A549 (cell line): ENCODE measurements at regions of chr12 and their contacts with region 1.

Region 1: GRCh38 chr12:64696080-64696741 is 63.0 kb downstream of the GNS start:
- DNase-seq: peak; percentile 42 to 53
- ATAC-seq: peak; percentile 11 to 45; a peak in 3 of 6 replicates
- H3K4me3 ChIP-seq: no peak overlapping the region
- H3K27ac ChIP-seq: peak overlapping the region; percentile 38 to 49; a peak in 5 of 6 replicates
- H3K4me1 ChIP-seq: peaks cover 21% of the 10 kb centered on the region
- CTCF ChIP-seq: peak; percentile 78
- EP300 ChIP-seq: no peak
- POLR2A ChIP-seq: no peak
- RAD21 ChIP-seq: peak; percentile 82 to 92

Region 2: DNA sequence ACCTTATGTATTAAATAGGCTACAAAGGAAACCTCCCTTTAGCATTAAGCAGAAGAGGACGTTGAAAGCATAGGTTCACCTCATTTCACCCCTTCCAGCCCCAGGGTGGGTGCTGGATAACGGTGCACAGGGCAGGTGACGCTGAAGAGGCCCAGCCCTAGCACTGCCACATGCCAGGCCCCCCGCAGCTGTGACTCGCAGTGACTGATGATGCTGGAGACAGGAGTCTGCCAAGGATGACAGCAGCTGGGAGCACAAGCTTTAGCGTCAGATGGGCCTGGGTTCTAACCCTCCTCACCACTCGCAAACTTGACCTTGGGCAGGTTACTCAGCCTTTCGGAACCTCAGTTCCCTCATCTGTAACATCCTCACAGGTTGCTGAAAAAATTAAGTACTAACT is 167.6 kb before region 1 on chr12:
- CTCF ChIA-PET with region 1: interaction called, 27 read pairs
- POLR2A ChIA-PET with region 1: no interaction called
- DNase-seq: no peak
- ATAC-seq: 0 out of 6 replicates have a peak, but pooled peaks of 1 of the 2 experiments have one; percentile 30
- H3K4me3 ChIP-seq: no peak overlapping the region
- H3K27ac ChIP-seq: no peak overlapping the region
- H3K4me1 ChIP-seq: no peaks in the 10 kb centered on the region
- CTCF ChIP-seq: no peak
- EP300 ChIP-seq: no peak
- POLR2A ChIP-seq: no peak
- RAD21 ChIP-seq: no peak

Region 3: GRCh38 chr12:64566732-64567399 is 129.3 kb before region 1 on chr12:
- CTCF ChIA-PET with region 1: interaction called, 342 read pairs
- POLR2A ChIA-PET with region 1: no interaction called
- DNase-seq: no peak
- ATAC-seq: no peak
- H3K4me3 ChIP-seq: no peak overlapping the region
- H3K27ac ChIP-seq: no peak overlapping the region
- H3K4me1 ChIP-seq: peaks cover under 1% of the 10 kb centered on the region; the same call in 2 of the 3 replicates
- CTCF ChIP-seq: no peak
- EP300 ChIP-seq: no peak
- POLR2A ChIP-seq: no peak
- RAD21 ChIP-seq: no peak

Region 4: DNA sequence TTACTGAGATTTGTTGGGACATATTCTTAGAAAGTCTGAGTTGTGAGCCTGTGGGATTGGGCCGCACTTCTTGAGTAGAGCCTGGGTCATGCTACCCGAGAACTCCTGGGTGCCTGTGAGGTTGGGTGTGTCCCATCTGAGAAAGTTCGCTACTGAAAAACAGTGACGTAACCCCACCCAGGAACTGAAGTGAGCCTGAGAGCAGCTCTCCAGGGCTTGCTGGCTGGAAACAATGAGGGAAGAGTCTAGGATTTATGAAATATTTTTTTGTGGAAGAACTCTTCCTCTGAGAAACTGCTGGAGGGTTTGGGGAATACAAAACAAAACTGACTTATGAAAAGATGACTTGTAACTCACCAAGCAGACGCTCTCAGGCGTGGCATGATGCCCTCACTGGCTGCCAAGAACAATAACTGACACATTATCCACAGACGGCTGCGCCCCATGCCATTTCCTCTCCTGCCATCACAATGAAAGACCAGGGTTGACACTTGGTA is 16.7 kb before region 1 on chr12:
- CTCF ChIA-PET with region 1: interaction called, 112 read pairs
- POLR2A ChIA-PET with region 1: no interaction called
- DNase-seq: peak; percentile 82 to 91
- ATAC-seq: peak; percentile 85 to 86
- H3K4me3 ChIP-seq: peak overlapping the region; percentile 34
- H3K27ac ChIP-seq: peak overlapping the region; percentile 86 to 92
- H3K4me1 ChIP-seq: peaks cover 88% of the 10 kb centered on the region
- CTCF ChIP-seq: no peak
- EP300 ChIP-seq: no peak
- POLR2A ChIP-seq: no peak
- RAD21 ChIP-seq: no peak

Region 5: GRCh38 chr12:64714551-64714968 is 18.3 kb after region 1 on chr12:
- CTCF ChIA-PET with region 1: interaction called, 45 read pairs
- POLR2A ChIA-PET with region 1: no interaction called
- DNase-seq: no peak
- ATAC-seq: no peak
- H3K4me3 ChIP-seq: no peak overlapping the region
- H3K27ac ChIP-seq: no peak overlapping the region
- H3K4me1 ChIP-seq: no peaks in the 10 kb centered on the region
- CTCF ChIP-seq: no peak
- EP300 ChIP-seq: no peak
- POLR2A ChIP-seq: no peak
- RAD21 ChIP-seq: no peak

Region 6: GRCh38 chr12:65004270-65004669 is 308.1 kb after region 1 on chr12:
- CTCF ChIA-PET with region 1: no interaction called
- POLR2A ChIA-PET with region 1: no interaction called
- DNase-seq: no peak
- ATAC-seq: no peak
- H3K4me3 ChIP-seq: no peak overlapping the region
- H3K27ac ChIP-seq: no peak overlapping the region
- H3K4me1 ChIP-seq: no peaks in the 10 kb centered on the region
- CTCF ChIP-seq: no peak
- EP300 ChIP-seq: no peak
- POLR2A ChIP-seq: no peak
- RAD21 ChIP-seq: no peak